Activated CD4-positive, alpha-beta memory T cell treated with anti-CD3 and anti-CD28 coated beads, Interleukin-2, amount 10 ng/mL, durations not matched to agents 7 days and 5 days (primary cell): ENCODE measurements at regions of chr12 and their contacts with region 1.

Region 1: GRCh38 chr12:54251667-54252284 is 28.1 kb downstream of the CBX5 start:
- DNase-seq: no peak
- H3K4me3 Mint-ChIP-seq: no peak overlapping the region
- H3K27ac Mint-ChIP-seq: no peak overlapping the region
- H3K4me1 Mint-ChIP-seq: peaks cover 2% of the 10 kb centered on the region
- H3K27me3 Mint-ChIP-seq: no peaks in the 10 kb centered on the region

Region 2: DNA sequence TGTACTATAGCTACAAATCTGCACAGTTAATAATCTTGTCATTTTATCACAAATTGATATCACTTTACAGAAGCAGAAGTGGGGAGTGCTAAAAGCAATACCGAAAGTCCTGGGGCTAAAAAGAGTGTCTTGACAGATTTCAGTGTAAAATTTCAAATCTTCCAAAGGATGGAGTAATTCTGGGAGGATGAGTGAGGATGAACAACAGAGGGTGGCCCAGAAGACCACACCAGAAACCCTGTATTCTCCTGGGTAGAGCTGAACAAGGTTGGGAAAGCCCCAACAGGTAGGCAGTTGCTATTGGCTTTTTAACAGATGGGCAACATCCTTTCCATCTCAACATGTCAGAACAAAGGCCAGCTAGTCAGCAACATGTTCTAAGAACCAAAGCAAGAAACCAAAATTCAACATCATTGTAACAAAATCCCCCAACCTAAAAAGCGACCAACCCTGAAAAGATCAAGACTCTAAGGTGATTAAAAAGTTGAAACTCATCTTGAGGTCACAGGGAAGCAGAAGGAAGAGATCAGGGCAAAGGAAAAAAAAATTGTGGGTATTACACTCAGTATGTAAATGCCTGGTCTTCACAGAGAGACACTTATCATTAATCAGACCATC is 10.7 kb before region 1 on chr12:
- CTCF ChIA-PET with region 1: interaction called, 62 read pairs
- POLR2A ChIA-PET with region 1: no interaction called
- DNase-seq: no peak
- H3K4me3 Mint-ChIP-seq: no peak overlapping the region
- H3K27ac Mint-ChIP-seq: peak overlapping the region; percentile 72
- H3K4me1 Mint-ChIP-seq: peaks cover 21% of the 10 kb centered on the region
- H3K27me3 Mint-ChIP-seq: no peaks in the 10 kb centered on the region

Region 3: DNA sequence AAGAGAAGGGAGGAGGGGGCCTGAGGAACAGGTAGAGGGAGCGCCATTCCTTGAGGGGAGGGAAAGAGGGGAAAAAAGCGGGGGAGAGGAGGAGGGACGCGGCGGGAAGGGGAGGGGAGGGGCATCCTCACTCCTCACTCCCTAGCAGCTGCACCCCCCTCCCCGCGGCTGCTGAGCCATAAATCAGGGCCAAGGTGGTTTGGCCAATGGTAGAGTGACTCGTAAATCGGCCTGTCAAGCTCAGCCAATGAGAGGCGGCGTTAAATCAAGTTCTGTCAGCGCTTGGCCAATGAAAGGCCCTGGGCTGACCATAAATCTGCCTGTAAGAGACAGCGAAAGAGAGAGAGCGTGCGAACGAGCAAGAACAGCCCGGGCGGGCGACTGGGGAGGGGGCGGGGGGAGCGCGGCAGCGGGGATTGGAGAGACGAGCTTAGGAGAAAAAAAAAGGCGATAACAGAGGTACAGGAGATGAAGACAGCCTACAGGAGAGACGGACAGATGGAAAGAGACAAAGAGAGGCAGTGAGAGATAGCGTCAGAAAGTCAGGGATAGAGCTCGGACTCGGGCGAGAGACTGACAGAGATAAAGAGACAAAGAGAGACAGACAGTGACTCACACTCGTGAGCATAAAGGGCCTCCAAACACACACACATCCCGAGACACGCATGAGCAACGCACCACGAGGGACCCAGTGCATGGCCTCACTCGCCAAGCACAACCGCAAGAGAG is 107.4 kb after region 1 on chr12:
- CTCF ChIA-PET with region 1: interaction called, 10 read pairs
- POLR2A ChIA-PET with region 1: interaction called, 5 read pairs
- DNase-seq: peak; percentile 97
- H3K4me3 Mint-ChIP-seq: no peak overlapping the region
- H3K27ac Mint-ChIP-seq: no peak overlapping the region
- H3K4me1 Mint-ChIP-seq: peaks cover 23% of the 10 kb centered on the region
- H3K27me3 Mint-ChIP-seq: no peaks in the 10 kb centered on the region

Region 4: DNA sequence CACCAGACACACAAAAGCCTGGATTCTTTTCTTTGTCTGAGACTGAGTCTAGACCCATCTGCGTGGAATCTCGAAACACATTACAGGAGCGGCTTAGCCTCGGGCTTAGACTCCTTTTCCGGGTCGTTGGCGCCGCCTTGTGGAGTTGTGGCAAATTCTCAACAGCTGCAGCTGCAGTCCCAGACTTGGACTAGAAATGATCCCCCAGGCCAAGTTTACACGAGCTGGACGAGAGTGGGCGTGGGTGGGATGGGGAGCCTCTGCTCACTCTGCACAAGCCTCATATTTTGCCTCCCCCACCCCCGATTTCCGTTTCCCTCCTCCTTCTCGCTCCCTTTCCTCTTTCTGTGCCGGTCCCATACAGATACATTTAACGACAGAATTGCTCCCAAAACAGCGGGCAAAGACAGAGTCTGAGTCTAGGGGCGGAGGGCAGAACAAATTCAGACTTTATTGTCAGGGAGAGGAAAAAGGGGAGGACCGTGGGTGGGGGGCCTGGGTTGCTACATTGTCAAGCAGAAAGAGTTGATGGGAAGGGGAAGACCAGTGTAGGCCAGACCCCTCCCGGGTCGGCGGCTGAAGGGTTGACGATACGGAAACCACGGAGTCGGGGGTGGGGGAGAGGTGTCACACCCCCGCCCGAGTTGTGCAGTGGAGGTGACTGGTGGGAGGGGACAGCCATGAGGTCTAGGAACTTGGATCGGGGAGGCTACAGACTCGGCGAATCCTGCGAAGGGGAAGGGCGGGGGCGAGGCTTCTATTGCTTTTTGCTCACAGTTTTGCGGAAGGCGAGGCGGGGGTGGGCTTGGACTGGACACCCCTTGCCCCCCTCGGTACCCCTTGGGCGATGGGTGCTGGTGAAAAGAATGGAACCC is 117.2 kb after region 1 on chr12:
- CTCF ChIA-PET with region 1: interaction called, 20 read pairs
- POLR2A ChIA-PET with region 1: no interaction called
- DNase-seq: peak; percentile 90
- H3K4me3 Mint-ChIP-seq: no peak overlapping the region
- H3K27ac Mint-ChIP-seq: no peak overlapping the region
- H3K4me1 Mint-ChIP-seq: peaks cover 54% of the 10 kb centered on the region
- H3K27me3 Mint-ChIP-seq: peaks cover 16% of the 10 kb centered on the region